Activated T-helper 1 cell treated with anti-CD3 and anti-CD28 coated beads, Interleukin-12 subunit alpha, Interleukin-12 subunit beta, Interleukin-2, Interleukin-4 antibody, amounts not matched to agents 30 ng/mL and 10 ng/mL and 1 ng/mL, durations not matched to agents 14 hours and 24 hours and 36 hours (primary cell): ENCODE measurements at regions of chr2 and their contacts with region 1.

Region 1: GRCh38 chr2:13006829-13007717 is 290.3 kb downstream of the TRIB2 start:
- DNase-seq: peak; percentile 39
- H3K4me3 Mint-ChIP-seq: no peak overlapping the region
- H3K27ac Mint-ChIP-seq: no peak overlapping the region
- H3K4me1 Mint-ChIP-seq: no peaks in the 10 kb centered on the region
- H3K27me3 Mint-ChIP-seq: peaks cover 32% of the 10 kb centered on the region

Region 2: GRCh38 chr2:11688222-11689069 is 1318.6 kb before region 1 on chr2:
- intact Hi-C with region 1: loop called (anchors 5 kb)
- DNase-seq: peak; percentile 78
- H3K4me3 Mint-ChIP-seq: peak overlapping the region; percentile 37
- H3K27ac Mint-ChIP-seq: no peak overlapping the region
- H3K4me1 Mint-ChIP-seq: peaks cover 10% of the 10 kb centered on the region
- H3K27me3 Mint-ChIP-seq: peaks cover 26% of the 10 kb centered on the region

Region 3: DNA sequence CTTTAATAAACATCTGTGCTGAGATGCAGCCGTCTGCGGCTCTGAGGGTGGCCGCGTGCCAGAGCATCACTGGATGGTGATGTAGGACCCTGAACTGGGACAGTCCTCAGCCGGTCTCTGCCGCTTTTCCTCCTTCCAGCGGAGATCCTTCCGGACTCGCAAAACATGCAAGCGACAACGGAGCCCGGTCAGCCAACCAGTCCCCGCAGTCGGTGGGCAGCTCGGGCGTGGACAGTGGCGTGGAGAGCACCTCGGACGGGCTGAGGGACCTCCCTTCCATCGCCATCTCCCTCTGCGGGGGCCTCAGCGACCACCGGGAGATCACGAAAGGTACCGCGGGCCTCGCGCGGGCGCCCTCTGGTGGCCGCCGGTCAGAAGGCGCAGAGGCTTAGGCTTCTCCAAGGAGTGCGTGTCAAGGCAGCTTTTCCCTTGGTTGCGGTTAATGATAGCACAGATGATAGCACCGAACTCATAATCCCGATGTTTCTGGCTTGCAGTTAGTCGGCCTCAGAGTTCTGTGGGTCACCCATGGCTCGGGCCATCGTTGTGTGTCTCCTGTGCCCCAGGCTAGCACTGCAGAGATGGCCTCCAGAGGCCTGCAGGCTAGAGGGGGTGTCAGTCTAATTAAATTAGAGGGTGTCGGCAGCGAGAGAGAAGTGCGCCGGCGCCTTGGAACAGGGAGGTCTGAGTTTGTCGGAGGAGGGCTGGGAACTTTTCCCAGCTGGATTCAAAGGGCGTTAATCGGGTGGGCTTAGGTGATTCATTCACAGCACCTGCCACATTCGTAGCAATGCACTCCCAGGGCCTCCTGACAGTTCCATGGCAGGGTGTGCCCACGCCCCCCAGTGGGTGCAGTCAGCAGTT is 1222.1 kb before region 1 on chr2:
- intact Hi-C with region 1: loop called (anchors 2 kb)
- DNase-seq: peak; percentile 18
- H3K4me3 Mint-ChIP-seq: no peak overlapping the region
- H3K27ac Mint-ChIP-seq: no peak overlapping the region
- H3K4me1 Mint-ChIP-seq: no peaks in the 10 kb centered on the region
- H3K27me3 Mint-ChIP-seq: no peaks in the 10 kb centered on the region

Region 4: GRCh38 chr2:11863513-11864328 is 1143.4 kb before region 1 on chr2:
- intact Hi-C with region 1: loop called (anchors 1 kb)
- DNase-seq: peak; percentile 22
- H3K4me3 Mint-ChIP-seq: no peak overlapping the region
- H3K27ac Mint-ChIP-seq: no peak overlapping the region
- H3K4me1 Mint-ChIP-seq: peaks cover 9% of the 10 kb centered on the region
- H3K27me3 Mint-ChIP-seq: peaks cover 19% of the 10 kb centered on the region

Region 5: GRCh38 chr2:12456293-12457151 is 550.6 kb before region 1 on chr2:
- intact Hi-C with region 1: loop called (anchors 10 kb)
- DNase-seq: peak; percentile 40
- H3K4me3 Mint-ChIP-seq: peak overlapping the region; percentile 66
- H3K27ac Mint-ChIP-seq: peak overlapping the region; percentile 83
- H3K4me1 Mint-ChIP-seq: peaks cover 33% of the 10 kb centered on the region
- H3K27me3 Mint-ChIP-seq: no peaks in the 10 kb centered on the region

Region 6: GRCh38 chr2:12819103-12819475 is 188.0 kb before region 1 on chr2:
- intact Hi-C with region 1: no loop called
- DNase-seq: no peak
- H3K4me3 Mint-ChIP-seq: no peak overlapping the region
- H3K27ac Mint-ChIP-seq: no peak overlapping the region
- H3K4me1 Mint-ChIP-seq: peaks cover 5% of the 10 kb centered on the region
- H3K27me3 Mint-ChIP-seq: peaks cover 13% of the 10 kb centered on the region

Region 7: DNA sequence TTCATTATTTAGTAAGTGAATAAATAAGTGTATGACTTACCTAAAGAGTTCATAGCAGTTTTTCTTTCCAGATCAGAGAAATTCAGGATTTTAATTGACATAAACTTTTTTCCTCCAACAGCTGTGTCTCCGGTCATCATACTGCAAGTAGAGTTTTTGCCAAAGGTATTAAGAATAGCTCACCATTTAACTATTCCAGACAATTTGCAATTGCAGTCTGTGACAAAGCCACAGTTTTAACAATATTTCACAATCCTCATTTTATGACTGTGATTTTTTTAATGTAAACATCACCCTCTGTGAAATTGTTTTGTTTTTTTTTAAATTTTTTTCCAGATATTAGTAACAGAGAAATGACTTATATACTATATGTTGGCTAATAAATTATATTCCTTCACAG is 91.3 kb before region 1 on chr2:
- intact Hi-C with region 1: no loop called
- DNase-seq: no peak
- H3K4me3 Mint-ChIP-seq: no peak overlapping the region
- H3K27ac Mint-ChIP-seq: no peak overlapping the region
- H3K4me1 Mint-ChIP-seq: no peaks in the 10 kb centered on the region
- H3K27me3 Mint-ChIP-seq: peaks cover 31% of the 10 kb centered on the region

Region 8: GRCh38 chr2:12931186-12931844 is 75.8 kb before region 1 on chr2:
- intact Hi-C with region 1: loop called (anchors 2 kb)
- DNase-seq: no peak
- H3K4me3 Mint-ChIP-seq: no peak overlapping the region
- H3K27ac Mint-ChIP-seq: no peak overlapping the region
- H3K4me1 Mint-ChIP-seq: peaks cover 10% of the 10 kb centered on the region
- H3K27me3 Mint-ChIP-seq: peaks cover 41% of the 10 kb centered on the region

Region 9: DNA sequence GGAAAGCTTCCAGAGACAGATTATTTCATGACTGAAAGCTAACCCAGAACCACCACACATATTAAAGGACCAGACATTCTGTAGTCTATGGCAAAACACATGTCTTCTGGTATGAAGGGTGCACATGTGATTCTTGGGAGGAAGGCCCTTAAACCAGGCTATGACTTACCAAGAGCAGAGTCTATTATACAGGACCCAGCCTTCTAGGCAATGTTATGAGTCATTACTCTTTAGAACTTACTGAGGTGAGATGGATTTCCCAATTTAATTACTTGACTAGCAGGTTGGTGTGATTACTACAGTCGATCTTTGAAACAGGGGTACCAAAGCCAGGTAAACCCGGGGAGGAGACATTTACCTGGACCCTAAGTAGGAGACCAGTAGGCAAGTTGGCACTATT is 60.4 kb after region 1 on chr2:
- intact Hi-C with region 1: no loop called
- DNase-seq: no peak
- H3K4me3 Mint-ChIP-seq: no peak overlapping the region
- H3K27ac Mint-ChIP-seq: no peak overlapping the region
- H3K4me1 Mint-ChIP-seq: no peaks in the 10 kb centered on the region
- H3K27me3 Mint-ChIP-seq: no peaks in the 10 kb centered on the region